Activated naive CD4-positive, alpha-beta T cell treated with anti-CD3 and anti-CD28 coated beads for 36 hours (primary cell): ENCODE measurements at regions of chr11 and their contacts with region 1.

Region 1: GRCh38 chr11:102287964-102288724 is 29.1 kb upstream of the BIRC3 start:
- DNase-seq: peak; percentile 46
- H3K4me3 Mint-ChIP-seq: peak overlapping the region; percentile 50
- H3K27ac Mint-ChIP-seq: no peak overlapping the region
- H3K4me1 Mint-ChIP-seq: peaks cover 16% of the 10 kb centered on the region
- H3K27me3 Mint-ChIP-seq: no peaks in the 10 kb centered on the region

Region 2: GRCh38 chr11:102268329-102269193 is 19.6 kb before region 1 on chr11:
- CTCF ChIA-PET with region 1: interaction called, 15 read pairs
- intact Hi-C with region 1: no loop called
- DNase-seq: peak; percentile 91
- H3K4me3 Mint-ChIP-seq: peak overlapping the region; percentile 60
- H3K27ac Mint-ChIP-seq: no peak overlapping the region
- H3K4me1 Mint-ChIP-seq: peaks cover 32% of the 10 kb centered on the region
- H3K27me3 Mint-ChIP-seq: no peaks in the 10 kb centered on the region

Region 3: DNA sequence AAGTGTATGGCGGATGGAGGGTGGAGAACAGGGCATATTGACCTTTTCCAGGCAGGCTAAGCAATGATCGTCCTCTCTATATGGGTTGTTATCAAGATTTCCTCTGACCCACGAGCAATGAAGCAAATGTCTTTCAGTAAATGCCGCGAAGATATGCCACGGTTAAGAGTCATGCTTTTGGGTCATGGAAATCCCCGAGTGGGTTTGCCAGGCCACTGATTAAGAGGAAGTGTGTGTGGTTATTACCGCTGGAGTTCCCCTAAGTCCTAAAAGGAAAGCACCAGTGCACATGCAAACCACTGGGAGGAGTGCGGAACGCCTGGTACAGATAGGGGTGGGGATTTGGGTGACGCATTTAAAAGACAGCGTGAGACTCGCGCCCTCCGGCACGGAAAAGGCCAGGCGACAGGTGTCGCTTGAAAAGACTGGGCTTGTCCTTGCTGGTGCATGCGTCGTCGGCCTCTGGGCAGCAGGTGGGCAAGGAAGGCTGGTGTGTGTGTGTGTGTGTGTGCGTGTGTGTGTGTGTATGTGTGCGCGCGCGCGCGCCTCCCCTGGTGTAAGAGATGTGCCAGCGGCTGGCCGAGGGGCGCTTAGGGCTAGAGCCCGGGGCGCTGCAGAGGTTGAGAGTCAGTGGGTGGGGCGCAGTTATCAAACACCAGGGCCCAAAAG is 29.1 kb after region 1 on chr11 and contains the start of gene BIRC3:
- CTCF ChIA-PET with region 1: interaction called, 180 read pairs
- intact Hi-C with region 1: loop called (anchors 1 kb)
- DNase-seq: peak; percentile 97
- H3K4me3 Mint-ChIP-seq: peak within 1 kb of the TSS; percentile 96
- H3K27ac Mint-ChIP-seq: peak within 1 kb of the TSS; percentile 98
- H3K4me1 Mint-ChIP-seq: peaks cover 66% of the 10 kb centered on the region
- H3K27me3 Mint-ChIP-seq: no peaks in the 10 kb centered on the region
- total RNA-seq, gene BIRC3: 100 to 105 TPM

Region 4: GRCh38 chr11:102361086-102362031 is 73.2 kb after region 1 on chr11:
- CTCF ChIA-PET with region 1: interaction called, 14 read pairs
- intact Hi-C with region 1: loop called (anchors 1 kb)
- DNase-seq: peak; percentile 44
- H3K4me3 Mint-ChIP-seq: peak overlapping the region; percentile 49
- H3K27ac Mint-ChIP-seq: peak overlapping the region; percentile 79
- H3K4me1 Mint-ChIP-seq: peaks cover 54% of the 10 kb centered on the region
- H3K27me3 Mint-ChIP-seq: no peaks in the 10 kb centered on the region

Region 5: GRCh38 chr11:102390667-102391465 is 102.7 kb after region 1 on chr11:
- CTCF ChIA-PET with region 1: interaction called, 14 read pairs
- intact Hi-C with region 1: no loop called
- DNase-seq: peak; percentile 72
- H3K4me3 Mint-ChIP-seq: no peak overlapping the region
- H3K27ac Mint-ChIP-seq: peak overlapping the region; percentile 29
- H3K4me1 Mint-ChIP-seq: peaks cover 40% of the 10 kb centered on the region
- H3K27me3 Mint-ChIP-seq: no peaks in the 10 kb centered on the region

Region 6: GRCh38 chr11:102513869-102514268 is 225.7 kb after region 1 on chr11:
- CTCF ChIA-PET with region 1: interaction called, 3 read pairs
- intact Hi-C with region 1: loop called (anchors 1 kb)
- DNase-seq: no peak
- H3K4me3 Mint-ChIP-seq: no peak overlapping the region
- H3K27ac Mint-ChIP-seq: no peak overlapping the region
- H3K4me1 Mint-ChIP-seq: no peaks in the 10 kb centered on the region
- H3K27me3 Mint-ChIP-seq: no peaks in the 10 kb centered on the region

Region 7: DNA sequence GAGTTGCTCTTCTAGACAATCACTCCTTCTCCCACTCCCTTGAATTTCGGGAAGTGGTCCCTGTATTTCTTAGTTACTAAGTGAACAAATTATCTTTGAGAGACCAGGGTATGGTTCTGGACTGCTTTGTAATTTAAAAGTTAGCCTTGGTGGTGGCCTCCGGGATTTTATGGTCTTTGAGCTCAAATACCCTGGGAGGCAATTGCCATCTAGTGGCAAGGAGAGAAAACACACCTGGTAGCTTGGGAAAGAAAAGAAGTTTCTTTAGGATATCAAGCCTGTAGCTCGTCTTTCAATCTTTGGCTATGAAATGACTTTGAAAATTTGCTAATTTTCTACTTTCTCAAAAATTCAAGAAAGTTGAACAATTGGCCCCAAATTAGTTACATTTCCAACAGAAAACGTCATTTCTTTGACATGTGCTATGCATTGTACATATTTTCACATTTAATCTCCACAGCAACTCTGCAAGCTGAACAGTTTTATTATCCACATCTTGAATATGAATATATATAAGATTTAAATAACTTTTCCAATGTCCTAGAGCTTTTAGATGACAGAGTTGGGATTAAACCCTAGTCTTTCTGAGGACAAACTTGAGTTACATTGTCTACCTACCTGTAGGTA is 378.3 kb after region 1 on chr11:
- CTCF ChIA-PET with region 1: interaction called, 15 read pairs
- intact Hi-C with region 1: loop called (anchors 1 kb)
- DNase-seq: peak; percentile 28
- H3K4me3 Mint-ChIP-seq: no peak overlapping the region
- H3K27ac Mint-ChIP-seq: no peak overlapping the region
- H3K4me1 Mint-ChIP-seq: no peaks in the 10 kb centered on the region
- H3K27me3 Mint-ChIP-seq: no peaks in the 10 kb centered on the region